H1 (cell line): ENCODE measurements at regions of chr9 and their contacts with region 1.

Region 1: DNA sequence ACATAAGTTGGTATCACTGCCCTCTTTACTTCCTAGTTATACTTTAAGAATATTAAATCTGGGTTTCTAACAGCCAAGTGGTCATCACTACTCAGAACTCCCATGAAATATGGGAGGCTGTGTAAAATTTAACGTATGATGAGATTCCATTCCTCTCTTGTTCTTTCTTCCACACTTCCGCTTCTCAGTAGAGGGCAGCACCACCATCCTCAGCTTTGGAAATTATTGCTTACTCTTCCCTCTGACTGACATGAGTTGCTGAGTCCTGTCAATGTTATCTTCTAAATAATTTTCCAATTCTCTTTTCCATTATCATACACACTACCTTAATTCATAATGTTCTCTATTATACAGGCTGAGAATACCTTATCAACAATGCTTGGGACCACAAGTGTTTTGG is 194.0 kb downstream of the RFX3 start:
- DNase-seq: no peak
- H3K4me3 ChIP-seq: no peak overlapping the region
- H3K27ac ChIP-seq: no peak overlapping the region
- H3K4me1 ChIP-seq: peaks cover 0 to 2% (median 0%) of the 10 kb centered on the region in 4 experiments; a peak in 1 of 7 replicates
- H3K27me3 ChIP-seq: no peaks in the 10 kb centered on the region
- CTCF ChIP-seq: peak in 2 of 3 experiments; percentile 43 to 58; a peak in 3 of 4 replicates
- EP300 ChIP-seq: no peak
- POLR2A ChIP-seq: no peak
- RAD21 ChIP-seq: peak; percentile 47 to 62; a peak in 3 of 4 replicates

Region 2: GRCh38 chr9:3240656-3241268 is 91.1 kb before region 1 on chr9:
- CTCF ChIA-PET with region 1: interaction called, 17 read pairs
- POLR2A ChIA-PET with region 1: no interaction called
- DNase-seq: peak; percentile 49 to 74
- H3K4me3 ChIP-seq: no peak overlapping the region
- H3K27ac ChIP-seq: no peak overlapping the region
- H3K4me1 ChIP-seq: peaks cover 0 to 5% (median 2%) of the 10 kb centered on the region in 4 experiments; a peak in 4 of 7 replicates
- H3K27me3 ChIP-seq: no peaks in the 10 kb centered on the region
- CTCF ChIP-seq: peak; percentile 83 to 92 (median 92)
- EP300 ChIP-seq: no peak
- POLR2A ChIP-seq: no peak
- RAD21 ChIP-seq: peak; percentile 88 to 92

Region 3: DNA sequence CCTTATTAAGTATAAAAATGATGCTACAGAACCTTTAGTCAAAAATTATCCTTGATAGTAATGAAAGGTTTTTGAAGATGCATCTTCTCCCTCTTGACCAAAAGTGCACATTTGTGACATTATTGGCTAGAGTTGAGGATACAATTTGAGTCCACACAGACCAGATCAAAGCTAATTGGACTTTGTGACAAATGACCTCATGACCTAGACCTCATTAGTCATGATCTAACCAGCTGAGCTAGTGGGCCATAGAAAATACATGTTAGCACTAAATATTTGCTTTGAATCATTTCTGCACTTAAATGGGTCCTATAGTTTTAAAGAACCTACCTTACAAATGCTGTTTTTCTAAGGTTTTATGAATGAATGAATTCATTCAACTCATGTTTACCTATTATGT is 11.9 kb after region 1 on chr9:
- CTCF ChIA-PET with region 1: interaction called, 14 read pairs
- POLR2A ChIA-PET with region 1: no interaction called
- DNase-seq: no peak
- H3K4me3 ChIP-seq: no peak overlapping the region
- H3K27ac ChIP-seq: no peak overlapping the region
- H3K4me1 ChIP-seq: no peaks in the 10 kb centered on the region
- H3K27me3 ChIP-seq: no peaks in the 10 kb centered on the region
- CTCF ChIP-seq: no peak
- EP300 ChIP-seq: no peak
- POLR2A ChIP-seq: no peak
- RAD21 ChIP-seq: no peak